Activated CD8-positive, alpha-beta memory T cell treated with anti-CD3 and anti-CD28 coated beads, Interleukin-2, amount 10 ng/mL, durations not matched to agents 7 days and 5 days (primary cell): ENCODE measurements at regions of chr3 and their contacts with region 1.

Region 1: GRCh38 chr3:4880850-4881249 is 98.4 kb upstream of the BHLHE40 start:
- DNase-seq: no peak
- ATAC-seq: no peak
- H3K4me3 Mint-ChIP-seq: no peak overlapping the region
- H3K27ac Mint-ChIP-seq: no peak overlapping the region
- H3K4me1 Mint-ChIP-seq: peaks cover 16% of the 10 kb centered on the region
- H3K27me3 Mint-ChIP-seq: no peaks in the 10 kb centered on the region

Region 2: GRCh38 chr3:4866841-4867240 is 14.0 kb before region 1 on chr3:
- CTCF ChIA-PET with region 1: interaction called, 12 read pairs
- DNase-seq: no peak
- ATAC-seq: no peak
- H3K4me3 Mint-ChIP-seq: peak overlapping the region; percentile 80
- H3K27ac Mint-ChIP-seq: peak overlapping the region; percentile 91
- H3K4me1 Mint-ChIP-seq: peaks cover 42% of the 10 kb centered on the region
- H3K27me3 Mint-ChIP-seq: no peaks in the 10 kb centered on the region